ENCODE measurements at regions of chr1 and their contacts with region 1.

Region 1: DNA sequence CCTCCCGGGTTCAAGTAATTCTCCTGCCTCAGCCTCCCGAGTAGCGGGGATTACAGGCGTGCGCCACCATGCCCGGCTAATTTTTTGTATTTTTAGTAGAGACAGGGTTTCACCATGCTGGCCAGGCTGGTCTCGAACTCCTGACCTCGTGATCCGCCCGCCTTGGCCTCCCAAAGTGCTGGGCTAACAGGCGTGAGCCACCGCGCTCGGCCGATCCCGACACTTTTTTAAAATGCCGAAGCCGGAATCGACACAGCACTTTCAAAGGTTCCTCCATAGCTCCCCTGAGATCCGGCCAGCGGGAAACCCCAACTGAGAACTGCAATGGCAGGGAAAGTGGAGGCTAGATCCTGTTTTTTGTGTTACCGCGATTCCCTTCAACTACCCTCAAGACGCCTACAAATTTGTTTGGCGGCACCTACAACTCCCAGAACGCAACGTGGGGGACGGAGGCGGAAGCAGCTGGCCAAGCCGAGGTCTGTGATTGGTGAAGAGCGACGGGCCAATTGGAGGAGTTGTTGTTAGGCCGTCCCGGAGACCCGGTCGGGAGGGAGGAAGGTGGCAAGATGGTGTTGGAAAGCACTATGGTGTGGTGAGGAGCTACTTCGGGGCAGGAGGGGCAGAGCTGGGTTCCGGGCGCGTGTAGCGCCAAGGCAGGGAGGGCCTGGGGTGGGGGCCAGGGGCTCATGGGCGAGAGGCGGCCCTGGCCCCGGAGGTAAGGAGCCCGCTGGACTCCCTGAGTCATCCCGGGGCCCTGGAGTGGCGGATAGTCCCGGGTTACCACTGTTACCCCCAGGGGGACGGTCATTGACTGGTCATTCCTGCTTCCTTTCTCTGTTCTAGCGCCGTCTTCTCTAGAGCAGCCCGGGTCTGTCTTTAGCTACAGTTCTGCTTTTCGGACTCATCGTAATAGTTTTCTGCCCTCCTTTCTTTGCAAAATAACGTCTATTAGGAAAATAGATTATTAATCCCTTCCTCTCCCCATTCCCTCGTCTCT is at the start of gene PSMD4:
- DNase-seq: peak; percentile 99
- H3K4me3 ChIP-seq: peak within 1 kb of the TSS; percentile 79
- H3K27ac ChIP-seq: peak within 1 kb of the TSS; percentile 75
- H3K4me1 ChIP-seq: peaks cover 5% of the 10 kb centered on the region
- H3K27me3 ChIP-seq: no peaks in the 10 kb centered on the region
- CTCF ChIP-seq: no peak
- total RNA-seq, gene PSMD4: 312 and 339 TPM in 2 replicates

Region 2: DNA sequence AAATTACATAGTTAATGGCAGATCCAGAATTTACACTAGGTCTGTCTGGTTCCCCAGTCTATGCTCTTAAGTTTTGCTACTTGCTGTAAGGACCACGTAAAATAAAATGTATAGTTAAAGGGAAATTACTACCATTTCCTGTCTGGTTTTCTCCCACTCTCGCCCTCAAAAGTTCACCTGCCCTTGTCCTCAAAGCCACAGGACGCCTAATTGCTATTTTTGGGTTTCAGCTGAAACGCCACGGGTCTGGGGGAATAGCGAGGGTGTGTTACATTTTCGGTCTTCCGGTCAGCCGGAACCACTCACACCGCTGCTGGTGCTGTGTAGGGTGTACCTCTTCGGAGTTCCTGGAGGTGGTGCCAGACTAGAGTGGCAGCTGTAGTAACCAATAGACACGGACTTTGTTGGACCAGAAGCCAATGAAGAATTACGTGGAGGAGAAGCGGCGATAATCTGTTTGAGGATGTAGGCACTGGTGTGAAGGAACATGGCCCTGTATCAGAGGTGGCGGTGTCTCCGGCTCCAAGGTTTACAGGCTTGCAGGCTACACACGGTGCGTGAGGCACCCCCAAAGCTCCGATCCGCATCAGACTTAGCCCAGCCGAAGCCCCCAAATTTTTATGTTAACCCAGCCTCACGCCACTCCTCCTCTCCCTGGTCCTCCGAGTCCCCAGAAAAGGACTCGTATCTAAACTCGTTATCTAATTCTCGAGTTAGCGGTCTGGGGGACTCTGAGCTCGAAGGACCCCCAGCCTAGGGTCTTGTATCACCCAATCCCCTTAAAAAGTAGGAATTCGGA is 767.4 kb before region 1 on chr1 and contains the start of gene TARS2:
- CTCF ChIA-PET with region 1: interaction called, 17 read pairs
- POLR2A ChIA-PET with region 1: no interaction called
- intact Hi-C with region 1: no loop called
- DNase-seq: peak; percentile 99
- H3K4me3 ChIP-seq: peak within 1 kb of the TSS; percentile 93
- H3K27ac ChIP-seq: peak within 1 kb of the TSS; percentile 68
- H3K4me1 ChIP-seq: peaks cover 5% of the 10 kb centered on the region
- H3K27me3 ChIP-seq: no peaks in the 10 kb centered on the region
- CTCF ChIP-seq: 0 out of 2 replicates have a peak, but pooled peaks have one; percentile 8
- total RNA-seq, gene TARS2: 32.0 and 36.6 TPM in 2 replicates

Region 3: GRCh38 chr1:151198255-151199127 is 56.0 kb before region 1 on chr1 and contains the start of gene PIP5K1A:
- CTCF ChIA-PET with region 1: interaction called, 3 read pairs
- POLR2A ChIA-PET with region 1: no interaction called
- intact Hi-C with region 1: loop called (anchors 1 kb)
- DNase-seq: peak; percentile 99
- H3K4me3 ChIP-seq: peak within 1 kb of the TSS; percentile 68
- H3K27ac ChIP-seq: peak within 1 kb of the TSS; percentile 90
- H3K4me1 ChIP-seq: peaks cover 6% of the 10 kb centered on the region
- H3K27me3 ChIP-seq: no peaks in the 10 kb centered on the region
- CTCF ChIP-seq: no peak
- total RNA-seq, gene PIP5K1A: 109 and 115 TPM in 2 replicates

Region 4: GRCh38 chr1:151309811-151310323 is 55.4 kb after region 1 on chr1:
- CTCF ChIA-PET with region 1: interaction called, 4 read pairs
- POLR2A ChIA-PET with region 1: interaction called, 35 read pairs
- intact Hi-C with region 1: no loop called
- DNase-seq: no peak
- H3K4me3 ChIP-seq: no peak overlapping the region
- H3K27ac ChIP-seq: no peak overlapping the region
- H3K4me1 ChIP-seq: no peaks in the 10 kb centered on the region
- H3K27me3 ChIP-seq: no peaks in the 10 kb centered on the region
- CTCF ChIP-seq: no peak